ENCODE measurements at regions of chr18 and their contacts with region 1.

Region 1: DNA sequence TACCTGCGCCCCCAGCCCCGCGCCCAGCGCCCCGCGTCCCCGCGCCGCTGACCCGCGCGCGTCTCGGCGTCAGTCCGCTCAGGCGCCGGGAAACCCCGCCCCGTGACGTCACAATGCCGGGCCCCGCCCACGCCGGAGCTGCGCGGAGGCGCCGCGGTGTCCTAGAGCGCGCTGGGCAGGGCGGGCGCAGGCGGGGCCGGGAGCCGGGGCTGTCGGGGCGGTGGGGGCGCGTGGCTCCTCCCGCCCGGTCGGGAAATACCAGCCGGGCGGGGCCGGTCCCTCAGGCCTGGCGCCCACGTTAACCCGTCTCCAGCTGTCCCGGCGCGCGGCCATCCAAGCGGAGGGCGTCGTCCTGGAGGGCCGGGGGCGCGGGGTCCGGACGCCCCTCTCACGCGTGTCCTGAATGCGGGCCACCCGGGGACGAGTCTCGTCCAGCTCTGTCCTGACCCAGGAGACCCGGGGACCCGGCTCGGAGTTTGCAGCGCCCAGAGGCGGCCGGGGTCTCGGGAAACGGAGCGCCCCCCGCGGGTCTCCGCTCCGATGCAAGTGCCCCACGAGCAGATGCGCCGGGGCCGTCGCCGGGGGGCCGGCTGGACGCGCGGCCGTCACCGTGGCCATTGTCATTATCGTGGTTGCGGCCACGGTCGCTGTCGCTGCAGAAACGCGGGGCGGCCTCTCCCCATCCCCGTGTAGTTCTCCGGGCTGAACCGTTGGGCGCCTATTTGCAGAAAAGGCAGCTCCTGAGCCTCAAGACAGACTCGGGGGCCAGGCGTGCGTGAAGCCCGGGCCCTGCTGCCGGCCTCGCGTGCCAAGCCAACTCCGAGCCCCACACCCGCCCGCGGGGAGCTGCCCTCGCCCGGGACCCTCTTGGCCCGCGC is at the start of gene SLC66A2:
- DNase-seq: peak; percentile 68 to 95
- H3K4me3 ChIP-seq: peak within 1 kb of the TSS; percentile 98 to 100
- H3K27ac ChIP-seq: peak within 1 kb of the TSS; percentile 68 to 75
- H3K4me1 ChIP-seq: peaks cover 11 to 20% of the 10 kb centered on the region in 2 donors
- H3K27me3 ChIP-seq: no peaks in the 10 kb centered on the region
- CTCF ChIP-seq: peak in 1 of 3 experiments; percentile 4
- total RNA-seq, gene SLC66A2: 52.9 TPM

Region 2: GRCh38 chr18:79679111-79679872 is 272.5 kb before region 1 on chr18 and contains the start of gene CTDP1:
- intact Hi-C with region 1: loop called (anchors 5 kb)
- DNase-seq: peak; percentile 96 to 99
- H3K4me3 ChIP-seq: peak within 1 kb of the TSS; percentile 92 to 99
- H3K27ac ChIP-seq: peak within 1 kb of the TSS; percentile 98 to 100
- H3K4me1 ChIP-seq: peaks cover 2 to 18% of the 10 kb centered on the region in 2 donors
- H3K27me3 ChIP-seq: no peaks in the 10 kb centered on the region
- CTCF ChIP-seq: no peak
- total RNA-seq, gene CTDP1: 31.7 TPM

Region 3: GRCh38 chr18:80022613-80023012 is 70.8 kb after region 1 on chr18:
- intact Hi-C with region 1: no loop called
- DNase-seq: no peak
- H3K4me3 ChIP-seq: no peak overlapping the region
- H3K27ac ChIP-seq: no peak overlapping the region
- H3K4me1 ChIP-seq: no peaks in the 10 kb centered on the region
- H3K27me3 ChIP-seq: no peaks in the 10 kb centered on the region
- CTCF ChIP-seq: no peak

Region 4: DNA sequence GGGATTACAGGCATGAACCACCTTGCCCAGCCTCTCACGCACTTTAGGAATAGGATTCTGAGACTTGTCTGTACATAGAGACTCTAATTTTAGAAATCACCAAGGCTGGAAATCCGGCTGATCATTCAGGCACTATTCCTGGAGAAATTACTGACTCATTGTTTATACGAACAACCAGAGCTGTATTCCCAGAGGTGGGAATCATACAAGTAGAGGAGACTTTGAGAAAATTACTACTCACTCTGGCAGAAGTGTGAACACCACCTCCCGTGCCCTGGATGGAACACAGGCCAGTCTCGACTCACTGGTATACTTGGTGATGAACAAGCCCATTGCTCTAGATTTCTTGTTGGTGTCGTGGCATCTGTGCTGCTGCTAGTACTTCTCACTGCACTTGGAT is 151.4 kb after region 1 on chr18:
- intact Hi-C with region 1: loop called (anchors 2 kb)
- DNase-seq: peak; percentile 44 to 87
- H3K4me3 ChIP-seq: no peak overlapping the region
- H3K27ac ChIP-seq: peak overlapping the region; percentile 39 to 74
- H3K4me1 ChIP-seq: peaks cover 4 to 6% of the 10 kb centered on the region in 2 donors
- H3K27me3 ChIP-seq: no peaks in the 10 kb centered on the region
- CTCF ChIP-seq: no peak

Measured in ascending aorta (tissue), 2 donors.